Activated CD4-positive, alpha-beta memory T cell treated with anti-CD3 and anti-CD28 coated beads for 36 hours (primary cell): ENCODE measurements at regions of chr3 and their contacts with region 1.

Region 1: GRCh38 chr3:66472313-66473134 is 28.3 kb downstream of the LRIG1 start:
- DNase-seq: peak; percentile 77
- H3K4me3 Mint-ChIP-seq: peak overlapping the region; percentile 64
- H3K27ac Mint-ChIP-seq: peak overlapping the region; percentile 93
- H3K4me1 Mint-ChIP-seq: peaks cover 67% of the 10 kb centered on the region
- H3K27me3 Mint-ChIP-seq: no peaks in the 10 kb centered on the region

Region 2: DNA sequence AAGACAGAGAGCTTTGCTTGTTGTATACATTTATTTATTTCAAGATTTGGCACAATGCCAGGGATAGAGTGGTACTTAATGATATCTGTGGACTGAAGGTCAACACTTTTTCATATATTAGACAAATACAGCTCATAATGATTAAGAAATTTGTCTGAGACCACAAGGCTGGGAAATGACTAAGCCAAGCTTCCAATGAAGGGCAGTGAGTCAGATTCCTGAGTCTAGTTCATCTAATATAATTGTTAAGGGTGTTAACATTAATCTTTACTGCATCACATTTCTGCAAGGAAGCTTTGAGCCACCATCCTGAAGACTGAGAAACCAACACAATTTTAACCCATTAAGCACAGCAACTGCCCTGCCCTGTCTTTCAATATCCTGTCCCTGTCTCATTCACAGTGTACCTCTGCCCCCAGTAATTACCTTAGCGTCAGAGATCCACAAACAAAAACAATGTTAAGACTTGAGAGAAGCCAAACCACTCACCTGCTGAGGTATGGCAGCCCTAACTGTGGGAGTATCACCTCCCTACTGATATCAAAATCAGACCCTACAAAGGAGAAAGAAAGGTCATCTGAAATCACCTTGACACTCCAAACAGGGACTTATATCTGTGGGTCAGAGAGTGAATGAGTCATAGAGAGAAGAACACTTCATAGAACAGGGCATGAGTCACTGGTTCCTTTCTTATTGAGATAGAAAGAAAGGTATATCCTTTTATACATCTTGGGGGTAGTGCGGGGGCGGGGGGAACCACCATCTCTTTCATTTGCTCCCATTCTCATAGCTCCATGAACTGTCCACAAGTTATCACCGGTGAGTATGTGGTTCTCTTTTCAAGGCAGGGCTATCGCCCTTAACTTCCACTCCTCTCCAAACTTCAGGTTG is 508.5 kb before region 1 on chr3:
- CTCF ChIA-PET with region 1: no interaction called
- POLR2A ChIA-PET with region 1: no interaction called
- intact Hi-C with region 1: loop called (anchors 2 kb)
- DNase-seq: peak; percentile 78
- H3K4me3 Mint-ChIP-seq: no peak overlapping the region
- H3K27ac Mint-ChIP-seq: peak overlapping the region; percentile 86
- H3K4me1 Mint-ChIP-seq: peaks cover 10% of the 10 kb centered on the region
- H3K27me3 Mint-ChIP-seq: peaks cover 7% of the 10 kb centered on the region

Region 3: DNA sequence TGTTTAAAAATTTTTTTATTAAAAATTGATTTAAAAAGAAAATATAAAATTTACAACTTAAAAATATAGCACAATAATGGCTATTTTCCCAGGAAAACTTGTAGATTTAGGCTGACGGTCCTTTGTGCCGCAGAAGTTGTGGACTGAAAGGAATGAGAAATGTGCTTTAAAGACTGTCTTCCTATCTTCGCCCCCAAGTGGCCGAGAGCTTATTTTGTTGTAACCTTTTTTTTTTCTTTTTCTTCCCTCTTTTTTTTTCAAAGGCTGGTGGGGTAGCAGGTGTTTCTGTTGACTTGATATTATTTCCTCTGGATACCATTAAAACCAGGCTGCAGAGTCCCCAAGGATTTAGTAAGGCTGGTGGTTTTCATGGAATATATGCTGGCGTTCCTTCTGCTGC is 236.2 kb before region 1 on chr3:
- CTCF ChIA-PET with region 1: interaction called, 4 read pairs
- POLR2A ChIA-PET with region 1: interaction called, 6 read pairs
- intact Hi-C with region 1: loop called (anchors 5 kb)
- DNase-seq: no peak
- H3K4me3 Mint-ChIP-seq: no peak overlapping the region
- H3K27ac Mint-ChIP-seq: no peak overlapping the region
- H3K4me1 Mint-ChIP-seq: peaks cover 28% of the 10 kb centered on the region
- H3K27me3 Mint-ChIP-seq: no peaks in the 10 kb centered on the region

Region 4: DNA sequence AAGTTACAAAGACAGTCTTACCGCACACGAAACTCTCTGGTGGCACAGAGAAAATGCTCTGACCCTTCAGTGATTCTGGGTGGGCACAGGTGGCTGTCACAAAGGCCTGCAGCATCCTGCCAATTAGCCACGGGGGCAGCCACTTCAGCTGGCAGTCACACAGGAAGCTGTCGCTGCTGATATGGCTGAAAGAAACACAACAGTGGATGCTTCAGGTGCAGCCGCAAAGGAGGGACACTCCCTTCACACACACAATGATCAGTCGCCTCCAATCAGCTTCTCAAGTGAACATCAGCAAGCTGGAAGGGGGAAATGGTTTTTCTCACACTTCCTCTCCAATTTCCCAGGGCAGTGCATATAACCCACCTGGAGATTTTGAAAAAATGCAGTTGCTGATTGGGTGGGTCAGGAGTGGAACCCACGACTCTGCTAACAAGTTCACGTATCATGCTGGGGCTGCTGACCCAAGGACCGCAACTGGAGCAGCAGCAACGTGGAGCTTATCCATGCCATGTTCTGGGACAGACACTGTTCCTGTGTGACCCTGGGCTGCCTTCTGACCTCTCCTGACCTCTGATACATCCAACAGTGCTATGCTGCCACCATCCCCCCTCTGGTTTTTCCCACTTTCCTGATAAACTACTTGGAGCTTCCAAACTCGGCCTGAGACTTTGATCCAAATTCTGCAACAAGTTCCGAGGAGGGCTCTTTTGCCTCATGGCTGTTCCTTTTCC is 78.3 kb before region 1 on chr3:
- CTCF ChIA-PET with region 1: no interaction called
- POLR2A ChIA-PET with region 1: interaction called, 5 read pairs
- intact Hi-C with region 1: loop called (anchors 5 kb)
- DNase-seq: peak; percentile 74
- H3K4me3 Mint-ChIP-seq: peak overlapping the region; percentile 73
- H3K27ac Mint-ChIP-seq: peak overlapping the region; percentile 93
- H3K4me1 Mint-ChIP-seq: peaks cover 57% of the 10 kb centered on the region
- H3K27me3 Mint-ChIP-seq: no peaks in the 10 kb centered on the region

Region 5: GRCh38 chr3:66483406-66483906 is 10.9 kb after region 1 on chr3:
- CTCF ChIA-PET with region 1: interaction called, 11 read pairs
- POLR2A ChIA-PET with region 1: interaction called, 19 read pairs
- intact Hi-C with region 1: loop called (anchors 1 kb)
- DNase-seq: no peak
- H3K4me3 Mint-ChIP-seq: peak overlapping the region; percentile 53
- H3K27ac Mint-ChIP-seq: no peak overlapping the region
- H3K4me1 Mint-ChIP-seq: peaks cover 47% of the 10 kb centered on the region
- H3K27me3 Mint-ChIP-seq: no peaks in the 10 kb centered on the region

Region 6: GRCh38 chr3:66500576-66501482 is 28.3 kb after region 1 on chr3 and contains the start of gene LRIG1:
- CTCF ChIA-PET with region 1: no interaction called
- POLR2A ChIA-PET with region 1: interaction called, 19 read pairs
- intact Hi-C with region 1: loop called (anchors 1 kb)
- DNase-seq: peak; percentile 99
- H3K4me3 Mint-ChIP-seq: peak within 1 kb of the TSS; percentile 96
- H3K27ac Mint-ChIP-seq: peak within 1 kb of the TSS; percentile 91
- H3K4me1 Mint-ChIP-seq: peaks cover 53% of the 10 kb centered on the region
- H3K27me3 Mint-ChIP-seq: no peaks in the 10 kb centered on the region
- total RNA-seq, gene LRIG1: 35.3 to 40.4 TPM